B cell (primary cell): ENCODE measurements at regions of chr12 and their contacts with region 1.

Region 1: DNA sequence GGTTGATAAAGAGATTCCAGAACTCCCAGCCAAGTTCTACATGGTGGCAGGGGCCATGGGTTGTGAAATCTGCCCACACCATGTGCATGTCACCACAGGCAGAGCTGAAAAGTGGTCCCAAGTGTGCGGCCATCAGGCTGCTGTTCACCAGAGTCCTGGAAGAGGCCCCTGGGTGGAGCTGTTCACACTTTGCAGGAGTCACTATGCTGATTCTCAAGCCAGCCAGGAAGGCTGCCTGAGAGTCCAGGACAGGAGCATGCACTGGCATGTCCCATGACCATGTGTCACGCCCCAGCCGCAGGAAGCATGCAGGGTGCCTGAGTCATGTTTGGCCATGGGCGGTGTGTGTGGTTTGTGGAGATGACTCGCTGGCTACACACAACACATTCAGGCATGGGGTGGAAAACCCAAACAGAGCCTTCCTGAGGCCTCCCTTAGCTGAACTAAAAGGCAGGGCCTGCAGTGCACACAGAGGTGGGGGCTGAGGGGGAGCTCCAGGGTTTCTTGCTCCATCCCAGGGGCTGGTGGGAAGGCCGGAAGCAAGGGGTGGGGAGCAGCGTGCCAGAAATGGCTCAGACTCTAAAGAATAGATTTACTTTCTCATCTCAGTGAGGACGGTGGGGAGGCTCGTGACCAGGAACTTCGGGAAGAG is 19.4 kb downstream of the ABCB9 start:
- DNase-seq: peak; percentile 46
- ATAC-seq: peak; percentile 67
- H3K4me3 ChIP-seq: no peak overlapping the region
- H3K4me3 Mint-ChIP-seq: peak overlapping the region; percentile 54
- H3K27ac ChIP-seq: no peak overlapping the region
- H3K27ac Mint-ChIP-seq: peak overlapping the region; percentile 47
- H3K4me1 ChIP-seq: peaks cover 25 to 33% of the 10 kb centered on the region in 2 donors
- H3K4me1 Mint-ChIP-seq: peaks cover 42% of the 10 kb centered on the region
- H3K27me3 ChIP-seq: no peaks in the 10 kb centered on the region
- H3K27me3 Mint-ChIP-seq: no peaks in the 10 kb centered on the region
- CTCF ChIP-seq: no peak

Region 2: GRCh38 chr12:122935318-122935717 is 11.5 kb before region 1 on chr12:
- CTCF ChIA-PET with region 1: interaction called, 3 read pairs
- POLR2A ChIA-PET with region 1: interaction called, 10 read pairs
- intact Hi-C with region 1: no loop called
- DNase-seq: no peak
- ATAC-seq: no peak
- H3K4me3 ChIP-seq: no peak overlapping the region
- H3K4me3 Mint-ChIP-seq: no peak overlapping the region
- H3K27ac ChIP-seq: no peak overlapping the region
- H3K27ac Mint-ChIP-seq: no peak overlapping the region
- H3K4me1 ChIP-seq: peaks cover 7 to 23% of the 10 kb centered on the region in 2 donors
- H3K4me1 Mint-ChIP-seq: peaks cover 10% of the 10 kb centered on the region
- H3K27me3 ChIP-seq: no peaks in the 10 kb centered on the region
- H3K27me3 Mint-ChIP-seq: no peaks in the 10 kb centered on the region
- CTCF ChIP-seq: no peak

Region 3: DNA sequence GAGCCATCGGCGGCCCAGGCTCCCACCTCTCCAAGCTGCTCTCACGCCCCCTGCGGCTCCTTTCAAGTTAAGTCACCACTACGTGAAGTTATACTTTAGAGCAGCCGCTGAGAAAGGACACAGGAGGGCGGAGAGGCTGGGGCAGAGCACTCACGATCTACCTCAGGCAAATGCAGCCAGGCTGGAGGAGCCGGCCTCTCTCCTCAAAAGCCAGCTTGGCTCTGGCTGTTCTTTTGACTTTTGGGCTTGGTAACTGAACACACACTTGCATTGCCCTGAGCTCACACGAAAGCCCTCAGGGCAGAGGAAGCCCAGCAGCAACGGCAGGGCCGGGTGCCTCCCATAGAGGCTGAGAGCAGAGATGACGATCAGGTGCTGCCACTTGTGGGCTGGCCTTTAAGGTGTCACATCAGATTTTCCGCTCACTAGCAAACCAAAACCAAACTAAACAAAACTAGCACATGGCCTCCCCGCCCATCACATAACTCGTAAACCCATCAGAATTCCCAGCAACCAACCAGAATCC is 128.9 kb after region 1 on chr12:
- CTCF ChIA-PET with region 1: no interaction called
- POLR2A ChIA-PET with region 1: no interaction called
- intact Hi-C with region 1: no loop called
- DNase-seq: peak; percentile 53
- ATAC-seq: peak; percentile 86
- H3K4me3 ChIP-seq: peak overlapping the region in 1 of 5 experiments; percentile 6
- H3K4me3 Mint-ChIP-seq: peak overlapping the region; percentile 74
- H3K27ac ChIP-seq: peak overlapping the region; percentile 41 to 63
- H3K27ac Mint-ChIP-seq: peak overlapping the region; percentile 86
- H3K4me1 ChIP-seq: peaks cover 16 to 34% of the 10 kb centered on the region in 2 donors
- H3K4me1 Mint-ChIP-seq: peaks cover 34% of the 10 kb centered on the region
- H3K27me3 ChIP-seq: peaks cover 0 to 3% (median 0%) of the 10 kb centered on the region in 4 experiments
- H3K27me3 Mint-ChIP-seq: no peaks in the 10 kb centered on the region
- CTCF ChIP-seq: no peak